ENCODE measurements at regions of chrX and their contacts with region 1.

Region 1: DNA sequence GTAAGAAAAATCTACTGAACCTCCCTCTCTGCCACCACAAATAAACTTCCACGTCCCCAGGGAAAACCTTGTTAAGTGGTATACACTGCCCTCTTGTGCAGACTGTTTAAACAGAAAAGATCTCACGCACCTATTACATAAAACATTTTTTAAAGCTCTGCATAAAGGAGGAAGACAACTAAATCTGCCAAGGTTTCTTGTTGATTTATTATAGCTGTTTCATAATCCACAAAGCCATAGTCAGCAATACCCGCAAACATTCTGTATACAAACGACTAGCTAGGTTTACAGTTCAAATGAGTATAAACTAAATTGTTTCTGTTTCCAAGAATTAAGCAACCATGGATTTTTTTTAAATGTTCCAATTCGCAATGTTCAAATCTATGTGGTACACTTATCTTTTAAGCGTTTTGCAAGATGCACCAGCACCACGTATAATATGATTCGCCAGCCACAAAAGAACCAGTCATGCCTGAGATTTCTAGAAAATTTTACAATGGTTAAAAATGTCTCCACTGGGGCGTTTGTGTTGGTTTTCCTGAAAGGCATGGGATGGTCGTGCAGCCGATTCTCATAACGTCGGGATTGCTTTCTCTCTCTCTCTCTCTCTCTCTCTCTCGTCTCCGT is 164.6 kb downstream of the PRKX start:
- DNase-seq: no peak
- H3K4me3 Mint-ChIP-seq: peak overlapping the region; percentile 64
- H3K27ac Mint-ChIP-seq: peak overlapping the region; percentile 16
- H3K4me1 Mint-ChIP-seq: peaks cover 15% of the 10 kb centered on the region
- H3K27me3 Mint-ChIP-seq: no peaks in the 10 kb centered on the region
- CTCF ChIP-seq: no peak

Region 2: GRCh38 chrX:3119376-3119775 is 429.5 kb before region 1 on chrX:
- CTCF ChIA-PET with region 1: interaction called, 18 read pairs
- intact Hi-C with region 1: loop called (anchors 1 kb)
- DNase-seq: no peak
- H3K4me3 Mint-ChIP-seq: no peak overlapping the region
- H3K27ac Mint-ChIP-seq: no peak overlapping the region
- H3K4me1 Mint-ChIP-seq: no peaks in the 10 kb centered on the region
- H3K27me3 Mint-ChIP-seq: no peaks in the 10 kb centered on the region
- CTCF ChIP-seq: no peak

Region 3: DNA sequence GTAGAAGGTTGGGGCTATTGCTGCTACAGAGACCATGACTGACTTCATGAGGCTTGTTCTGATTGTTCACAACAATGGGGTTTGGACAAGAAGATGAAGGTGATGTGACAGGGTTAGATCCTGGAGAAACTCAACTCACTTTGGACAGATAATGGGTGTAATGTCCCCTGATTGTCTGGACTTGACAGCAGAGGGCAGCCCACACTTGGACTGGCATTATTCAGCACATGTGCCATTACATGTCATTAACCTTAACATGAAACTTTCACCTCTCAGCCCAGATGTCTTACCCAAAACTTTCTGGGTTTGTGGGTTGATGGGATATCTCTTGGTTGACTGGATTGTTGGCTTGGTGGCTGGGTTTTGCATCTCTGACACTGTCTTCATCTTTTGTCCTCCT is 303.9 kb before region 1 on chrX:
- CTCF ChIA-PET with region 1: no interaction called
- intact Hi-C with region 1: loop called (anchors 1 kb)
- DNase-seq: peak; percentile 7
- H3K4me3 Mint-ChIP-seq: no peak overlapping the region
- H3K27ac Mint-ChIP-seq: no peak overlapping the region
- H3K4me1 Mint-ChIP-seq: peaks cover 15% of the 10 kb centered on the region
- H3K27me3 Mint-ChIP-seq: peaks cover 43% of the 10 kb centered on the region
- CTCF ChIP-seq: no peak

Region 4: DNA sequence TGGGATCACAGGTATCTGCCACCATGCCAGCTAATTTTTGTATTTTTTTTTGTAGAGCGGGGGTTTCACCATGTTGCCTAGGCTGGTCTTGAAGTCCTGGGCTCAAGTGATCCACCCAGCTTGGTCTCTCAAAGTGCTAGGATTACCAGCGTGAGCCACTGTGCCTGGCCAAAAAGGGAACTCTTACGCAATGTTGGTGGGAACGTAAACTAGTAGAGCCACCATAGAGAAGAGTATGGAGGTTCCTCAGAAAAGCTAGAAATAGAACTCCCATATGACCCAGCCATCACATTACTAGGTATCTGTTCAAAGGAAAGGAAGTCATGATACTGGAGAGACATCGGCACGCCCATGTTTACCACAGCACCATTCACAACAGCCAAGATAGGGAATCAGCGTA is 78.7 kb after region 1 on chrX:
- CTCF ChIA-PET with region 1: no interaction called
- intact Hi-C with region 1: no loop called
- DNase-seq: no peak
- H3K4me3 Mint-ChIP-seq: no peak overlapping the region
- H3K27ac Mint-ChIP-seq: no peak overlapping the region
- H3K4me1 Mint-ChIP-seq: no peaks in the 10 kb centered on the region
- H3K27me3 Mint-ChIP-seq: no peaks in the 10 kb centered on the region
- CTCF ChIP-seq: no peak